Right cardiac atrium (tissue), 5 donors: ENCODE measurements at regions of chr11 and their contacts with region 1.

Region 1: DNA sequence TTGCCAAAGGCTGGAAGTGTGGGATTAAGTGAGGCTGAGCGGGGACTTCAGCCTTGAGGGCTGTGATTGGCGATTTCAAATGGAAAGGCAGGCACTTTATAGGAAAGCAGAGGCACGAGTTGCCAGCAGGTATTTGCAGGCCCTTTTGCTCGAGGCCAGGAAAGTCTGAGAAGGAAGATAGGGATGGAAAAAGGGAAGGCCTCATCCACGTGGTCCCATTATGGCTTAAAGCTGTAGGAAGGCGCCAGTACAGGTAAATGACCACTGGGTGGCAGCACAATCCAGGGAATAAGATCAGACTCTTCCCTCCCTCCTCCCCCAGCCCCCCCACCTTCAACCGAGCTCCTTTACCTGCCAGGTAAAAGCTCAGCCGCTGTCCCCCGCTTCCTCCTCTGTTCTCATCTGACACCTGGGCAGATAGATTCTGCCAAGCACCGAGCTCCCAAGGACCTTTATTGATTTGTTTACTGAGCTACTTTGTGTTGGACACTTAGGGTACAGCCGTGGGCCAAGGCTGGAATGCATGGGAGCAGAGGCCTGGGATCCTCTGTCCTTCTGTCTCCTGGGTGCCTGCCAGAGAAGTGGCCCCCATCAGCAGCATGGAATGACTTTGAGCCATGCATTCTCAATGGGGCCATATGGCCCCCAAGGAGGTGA is 7.5 kb downstream of the P2RX3 start:
- DNase-seq: peak; percentile 63 to 84 (median 81)
- ATAC-seq: peak; percentile 76 to 77
- H3K4me3 ChIP-seq: no peak overlapping the region
- H3K27ac ChIP-seq: no peak overlapping the region
- H3K4me1 ChIP-seq: no peaks in the 10 kb centered on the region
- H3K27me3 ChIP-seq: no peaks in the 10 kb centered on the region

Region 2: GRCh38 chr11:56977314-56977713 is 368.4 kb before region 1 on chr11:
- intact Hi-C with region 1: no loop called
- DNase-seq: no peak
- ATAC-seq: no peak
- H3K4me3 ChIP-seq: no peak overlapping the region
- H3K27ac ChIP-seq: no peak overlapping the region
- H3K4me1 ChIP-seq: no peaks in the 10 kb centered on the region
- H3K27me3 ChIP-seq: no peaks in the 10 kb centered on the region

Region 3: DNA sequence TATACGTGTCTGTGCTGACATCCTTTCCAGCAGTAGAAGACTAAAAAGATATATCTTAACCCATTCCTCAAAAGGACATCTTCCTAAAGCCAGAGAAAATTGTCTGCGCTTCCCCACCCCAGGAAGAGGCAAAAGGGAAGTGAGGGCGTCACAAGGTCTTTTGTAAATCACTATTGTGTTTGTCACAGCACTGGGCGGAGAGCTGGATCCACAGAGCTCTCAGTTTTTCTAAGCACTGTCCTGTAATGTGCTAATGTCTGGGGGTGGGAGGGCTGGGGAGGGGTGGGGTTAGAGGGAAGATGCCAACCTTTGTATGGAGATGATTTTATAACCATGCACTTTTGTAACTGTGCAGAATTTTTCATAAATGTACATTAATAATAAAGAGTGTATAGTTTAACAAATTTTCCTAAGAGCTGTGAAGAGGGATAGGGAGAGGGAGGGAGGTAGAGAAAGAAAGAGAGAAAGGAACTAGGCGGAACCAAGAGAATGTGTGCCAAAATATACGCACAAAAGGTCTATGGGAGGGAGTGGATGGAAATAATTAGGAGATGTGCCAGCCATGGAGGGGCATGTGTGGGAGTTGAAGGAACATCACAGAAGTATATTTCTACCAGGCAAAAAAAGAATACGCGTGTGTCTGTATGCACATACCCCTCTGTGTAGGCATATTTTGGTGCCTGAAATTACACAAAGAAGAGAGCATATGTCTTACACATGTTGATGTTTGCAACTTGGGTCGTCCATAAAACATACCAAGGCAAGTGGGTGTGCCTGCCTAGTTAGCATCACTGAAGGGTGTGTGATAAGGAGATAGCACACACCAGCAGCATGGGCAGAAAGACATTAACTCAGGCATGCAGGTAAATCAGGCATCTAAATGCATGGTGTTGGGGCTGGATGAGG is 154.1 kb before region 1 on chr11:
- intact Hi-C with region 1: no loop called
- DNase-seq: no peak
- ATAC-seq: peak in 1 of 2 donors; percentile 36
- H3K4me3 ChIP-seq: no peak overlapping the region
- H3K27ac ChIP-seq: no peak overlapping the region
- H3K4me1 ChIP-seq: peaks cover 3% of the 10 kb centered on the region
- H3K27me3 ChIP-seq: no peaks in the 10 kb centered on the region

Region 4: DNA sequence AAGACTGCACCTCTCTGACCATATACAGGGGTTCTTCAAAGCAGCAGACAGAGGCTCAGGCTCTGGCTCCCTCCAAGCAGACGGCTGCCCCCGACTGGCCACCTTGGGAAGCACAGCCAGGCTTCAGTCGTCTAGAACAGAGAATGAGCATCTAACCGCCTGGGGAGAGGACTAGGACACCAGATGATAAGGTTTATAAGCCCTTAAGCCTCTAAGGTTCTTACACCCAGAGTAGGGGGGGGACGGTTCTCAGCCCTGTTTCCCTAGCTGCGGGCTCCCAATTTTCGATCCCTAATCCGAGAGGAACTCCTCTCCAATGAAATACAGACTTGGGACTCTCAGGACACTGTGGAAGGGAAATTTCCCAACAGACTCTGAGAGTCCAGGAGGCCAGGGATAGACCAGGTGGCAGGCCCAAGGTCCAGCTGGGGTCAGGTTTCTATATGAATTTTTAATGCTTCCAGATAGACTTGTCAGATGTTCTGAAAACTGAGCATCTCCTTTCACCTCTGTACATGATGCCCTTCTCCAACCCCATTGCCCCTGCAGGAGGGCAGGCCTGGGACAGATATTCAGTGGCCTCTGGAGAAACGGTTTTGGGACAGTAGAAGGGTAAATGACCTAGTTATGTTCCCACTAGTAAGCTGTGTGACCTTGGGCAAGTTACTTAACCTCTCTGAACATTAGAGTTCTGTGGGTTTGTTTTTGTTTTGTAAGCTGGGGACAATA is 134.9 kb after region 1 on chr11:
- intact Hi-C with region 1: loop called in 2 of 4 experiments (anchors 5 kb)
- DNase-seq: peak; percentile 65 to 88 (median 88)
- ATAC-seq: peak; percentile 27 to 52
- H3K4me3 ChIP-seq: no peak overlapping the region
- H3K27ac ChIP-seq: no peak overlapping the region
- H3K4me1 ChIP-seq: peaks cover 5% of the 10 kb centered on the region
- H3K27me3 ChIP-seq: no peaks in the 10 kb centered on the region

Region 5: GRCh38 chr11:57527056-57527631 is 181.5 kb after region 1 on chr11:
- intact Hi-C with region 1: loop called in 2 of 4 experiments (anchors 5 kb)
- DNase-seq: peak; percentile 65 to 90 (median 79)
- ATAC-seq: no peak
- H3K4me3 ChIP-seq: no peak overlapping the region
- H3K27ac ChIP-seq: no peak overlapping the region
- H3K4me1 ChIP-seq: no peaks in the 10 kb centered on the region
- H3K27me3 ChIP-seq: no peaks in the 10 kb centered on the region

Region 6: DNA sequence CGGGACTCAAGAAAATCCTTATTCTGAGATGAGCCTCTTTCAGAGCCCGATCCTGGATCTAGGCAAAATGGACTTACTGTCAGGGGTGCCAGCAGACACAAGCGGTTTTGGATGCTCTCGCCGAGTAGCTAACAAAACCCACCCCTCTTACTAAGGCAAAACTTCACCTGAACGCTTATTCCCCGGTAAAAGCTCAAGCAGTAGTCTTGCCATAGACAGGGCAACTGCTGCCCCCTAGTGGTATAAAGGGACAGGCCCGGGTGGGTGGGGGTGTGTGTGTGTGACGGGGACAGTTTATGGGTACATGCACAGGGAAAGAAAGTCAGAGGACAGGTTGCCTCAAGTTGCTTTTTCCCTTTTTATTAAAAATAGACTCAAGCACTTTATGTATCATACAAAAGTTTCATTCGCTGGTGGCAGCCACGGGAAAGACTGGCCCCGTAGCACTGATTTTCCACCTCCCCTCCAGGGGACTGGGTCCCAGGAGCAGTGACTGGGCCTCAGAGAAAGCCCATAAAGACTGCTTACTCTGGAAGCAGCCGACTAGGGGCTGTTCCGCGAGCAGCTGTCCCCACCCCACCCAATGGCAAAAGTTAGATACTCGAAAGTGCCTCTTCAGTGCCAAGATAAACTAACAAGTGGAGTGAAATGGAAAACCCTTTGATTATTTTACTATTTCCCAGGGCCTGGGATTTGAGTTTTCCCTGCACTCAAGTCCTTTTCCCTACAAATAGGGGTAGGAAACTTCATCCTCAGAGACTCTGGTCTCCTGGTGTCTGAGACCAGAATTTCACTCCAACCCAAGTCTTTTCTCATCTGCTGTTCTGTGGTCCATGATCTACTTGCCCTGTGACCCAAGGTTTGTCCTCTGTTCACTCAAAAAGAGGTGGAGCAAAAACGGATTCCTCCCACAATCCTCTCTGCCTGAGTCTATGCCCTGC is 299.3 kb after region 1 on chr11:
- intact Hi-C with region 1: loop called in 3 of 4 experiments (anchors 10 kb)
- DNase-seq: peak; percentile 77 to 92 (median 90)
- ATAC-seq: peak; percentile 76 to 81
- H3K4me3 ChIP-seq: no peak overlapping the region
- H3K27ac ChIP-seq: no peak overlapping the region
- H3K4me1 ChIP-seq: peaks cover 18% of the 10 kb centered on the region
- H3K27me3 ChIP-seq: no peaks in the 10 kb centered on the region